Activated B cell treated with CpG ODN at 0.5 μM for 24 hours (primary cell): ENCODE measurements at regions of chr3 and their contacts with region 1.

Region 1: DNA sequence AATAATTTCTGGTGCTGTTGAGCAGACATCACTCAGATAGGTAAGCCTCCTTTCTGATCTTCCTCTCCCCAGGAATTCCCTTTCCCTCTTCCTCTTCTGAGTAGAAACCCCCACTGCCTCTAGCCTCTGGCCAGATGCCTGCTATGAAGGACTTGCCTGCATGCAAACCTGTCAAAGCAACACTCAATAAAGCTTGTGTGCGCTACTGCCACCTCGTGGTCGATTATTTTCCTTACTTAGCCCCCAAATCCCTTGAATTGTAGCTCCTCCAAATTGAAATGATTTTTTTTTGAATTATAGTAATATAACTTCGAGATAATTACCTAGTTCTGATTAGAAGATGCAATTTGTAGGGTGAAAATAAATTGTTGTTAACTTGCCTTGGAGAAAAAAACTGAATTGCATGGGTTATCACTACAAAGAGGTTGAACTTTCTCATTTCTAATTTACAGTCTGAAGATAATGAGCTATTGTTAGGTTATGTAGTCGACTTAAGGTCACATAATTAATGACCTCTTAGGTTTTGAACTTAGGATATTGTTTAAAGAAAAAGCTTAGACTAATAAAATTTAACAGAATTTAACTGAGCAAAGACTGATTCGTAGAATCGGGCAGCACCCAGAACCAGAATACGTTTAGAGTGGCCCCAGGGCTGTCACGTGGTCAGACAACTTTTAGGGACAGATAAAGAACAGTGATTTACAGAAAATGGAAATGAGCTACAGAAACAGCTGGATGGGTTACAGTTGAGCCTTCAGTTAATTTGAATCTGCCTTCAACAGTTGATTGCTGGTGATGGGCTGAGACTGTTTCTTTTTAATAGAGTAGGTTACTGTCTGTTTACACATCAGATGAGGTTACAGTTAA is 269.3 kb downstream of the ARPP21 start:
- DNase-seq: peak; percentile 15
- ATAC-seq: no peak
- H3K4me3 Mint-ChIP-seq: no peak overlapping the region
- H3K27ac Mint-ChIP-seq: no peak overlapping the region
- H3K4me1 Mint-ChIP-seq: no peaks in the 10 kb centered on the region
- H3K27me3 Mint-ChIP-seq: no peaks in the 10 kb centered on the region
- CTCF ChIP-seq: peak; percentile 46

Region 2: DNA sequence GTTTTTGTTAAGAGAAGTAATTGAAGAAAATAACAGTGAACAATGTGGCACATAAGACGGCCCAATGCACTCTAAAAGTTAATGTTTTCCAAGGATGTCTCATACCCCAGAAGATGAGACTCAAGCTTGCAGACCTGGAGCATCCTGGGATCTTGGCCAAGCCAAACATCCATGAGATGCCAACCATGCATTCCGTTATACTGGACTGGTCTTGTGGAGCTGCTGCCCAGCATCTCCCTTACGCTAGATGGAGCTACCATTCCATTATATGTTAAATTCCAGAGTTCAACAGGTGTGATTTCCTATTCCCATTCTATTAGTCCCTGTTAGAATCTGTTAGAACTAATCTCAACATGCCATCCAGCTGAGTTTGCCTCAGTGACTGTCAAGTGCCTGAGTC is 1928.3 kb before region 1 on chr3:
- CTCF ChIA-PET with region 1: interaction called, 4 read pairs
- POLR2A ChIA-PET with region 1: no interaction called
- intact Hi-C with region 1: loop called (anchors 2 kb)
- DNase-seq: no peak
- ATAC-seq: no peak
- H3K4me3 Mint-ChIP-seq: no peak overlapping the region
- H3K27ac Mint-ChIP-seq: no peak overlapping the region
- H3K4me1 Mint-ChIP-seq: no peaks in the 10 kb centered on the region
- H3K27me3 Mint-ChIP-seq: no peaks in the 10 kb centered on the region
- CTCF ChIP-seq: no peak

Region 3: GRCh38 chr3:34106879-34107278 is 1801.7 kb before region 1 on chr3:
- CTCF ChIA-PET with region 1: interaction called, 3 read pairs
- POLR2A ChIA-PET with region 1: no interaction called
- intact Hi-C with region 1: loop called (anchors 5 kb)
- DNase-seq: no peak
- ATAC-seq: no peak
- H3K4me3 Mint-ChIP-seq: no peak overlapping the region
- H3K27ac Mint-ChIP-seq: no peak overlapping the region
- H3K4me1 Mint-ChIP-seq: peaks cover 31% of the 10 kb centered on the region
- H3K27me3 Mint-ChIP-seq: no peaks in the 10 kb centered on the region
- CTCF ChIP-seq: no peak

Region 4: DNA sequence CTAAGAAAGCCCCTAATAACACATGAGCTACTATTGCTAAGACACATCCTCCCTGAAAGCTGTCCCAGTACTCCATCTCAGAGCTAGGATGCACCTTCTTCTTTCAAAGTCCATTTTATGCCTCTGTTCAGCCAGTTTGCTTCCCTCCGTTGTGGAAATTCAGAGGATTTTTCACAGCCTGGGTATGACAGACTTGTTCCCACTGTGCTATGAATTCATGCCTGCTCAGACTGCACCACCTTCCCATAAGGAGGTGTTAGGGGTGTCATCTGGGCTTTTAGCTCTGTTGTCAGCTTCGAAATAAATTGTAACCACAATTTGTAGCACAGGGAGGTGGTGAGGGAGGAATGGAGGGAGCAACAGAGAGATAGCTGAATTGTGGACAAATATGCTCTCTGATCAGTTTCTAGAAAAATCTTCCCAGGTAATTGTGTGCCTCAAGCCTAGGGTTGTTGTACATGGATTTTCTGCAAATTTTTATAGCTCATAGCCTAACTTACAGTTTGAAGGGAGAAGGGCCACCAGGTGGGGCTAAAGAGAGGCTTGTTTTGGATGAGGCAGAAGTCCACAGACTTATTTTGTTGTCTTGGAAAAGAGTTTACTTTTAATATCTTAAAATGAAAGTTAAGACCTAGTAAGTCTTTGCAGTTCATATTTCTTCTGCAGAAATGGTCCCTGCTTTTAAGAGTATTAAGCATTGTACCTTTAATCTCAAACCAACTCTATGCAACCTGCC is 1648.2 kb before region 1 on chr3:
- CTCF ChIA-PET with region 1: interaction called, 4 read pairs
- POLR2A ChIA-PET with region 1: no interaction called
- intact Hi-C with region 1: loop called (anchors 5 kb)
- DNase-seq: no peak
- ATAC-seq: no peak
- H3K4me3 Mint-ChIP-seq: no peak overlapping the region
- H3K27ac Mint-ChIP-seq: no peak overlapping the region
- H3K4me1 Mint-ChIP-seq: peaks cover 17% of the 10 kb centered on the region
- H3K27me3 Mint-ChIP-seq: no peaks in the 10 kb centered on the region
- CTCF ChIP-seq: no peak

Region 5: GRCh38 chr3:34882764-34883163 is 1025.8 kb before region 1 on chr3:
- CTCF ChIA-PET with region 1: no interaction called
- POLR2A ChIA-PET with region 1: no interaction called
- intact Hi-C with region 1: loop called (anchors 10 kb)
- DNase-seq: no peak
- ATAC-seq: no peak
- H3K4me3 Mint-ChIP-seq: no peak overlapping the region
- H3K27ac Mint-ChIP-seq: no peak overlapping the region
- H3K4me1 Mint-ChIP-seq: no peaks in the 10 kb centered on the region
- H3K27me3 Mint-ChIP-seq: no peaks in the 10 kb centered on the region
- CTCF ChIP-seq: no peak

Region 6: DNA sequence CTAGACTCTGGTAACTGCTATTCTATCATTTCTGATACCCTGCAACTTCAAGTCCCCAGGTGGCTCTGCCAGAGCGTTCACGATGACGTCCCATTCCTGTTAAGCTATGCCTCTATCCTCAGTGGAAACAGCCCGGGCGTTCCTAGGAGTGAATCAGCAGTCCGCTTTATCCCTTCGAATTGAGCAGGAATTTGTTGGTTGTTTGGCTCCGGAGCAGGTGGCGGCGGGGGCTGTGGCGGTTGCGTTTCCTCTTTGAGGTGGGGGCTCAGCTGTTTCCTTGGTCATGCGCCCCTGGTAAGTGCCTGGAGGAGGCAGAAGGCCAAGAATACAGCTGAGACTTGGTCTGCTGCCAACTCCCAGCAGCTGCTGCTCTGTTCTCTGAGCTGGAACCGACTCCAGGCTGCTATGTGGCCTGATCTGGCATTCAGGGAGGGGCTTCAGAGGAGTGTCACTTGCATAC is 244.1 kb before region 1 on chr3:
- CTCF ChIA-PET with region 1: no interaction called
- POLR2A ChIA-PET with region 1: no interaction called
- intact Hi-C with region 1: no loop called
- DNase-seq: peak; percentile 14
- ATAC-seq: peak; percentile 28
- H3K4me3 Mint-ChIP-seq: no peak overlapping the region
- H3K27ac Mint-ChIP-seq: no peak overlapping the region
- H3K4me1 Mint-ChIP-seq: peaks cover 6% of the 10 kb centered on the region
- H3K27me3 Mint-ChIP-seq: no peaks in the 10 kb centered on the region
- CTCF ChIP-seq: no peak

Region 7: DNA sequence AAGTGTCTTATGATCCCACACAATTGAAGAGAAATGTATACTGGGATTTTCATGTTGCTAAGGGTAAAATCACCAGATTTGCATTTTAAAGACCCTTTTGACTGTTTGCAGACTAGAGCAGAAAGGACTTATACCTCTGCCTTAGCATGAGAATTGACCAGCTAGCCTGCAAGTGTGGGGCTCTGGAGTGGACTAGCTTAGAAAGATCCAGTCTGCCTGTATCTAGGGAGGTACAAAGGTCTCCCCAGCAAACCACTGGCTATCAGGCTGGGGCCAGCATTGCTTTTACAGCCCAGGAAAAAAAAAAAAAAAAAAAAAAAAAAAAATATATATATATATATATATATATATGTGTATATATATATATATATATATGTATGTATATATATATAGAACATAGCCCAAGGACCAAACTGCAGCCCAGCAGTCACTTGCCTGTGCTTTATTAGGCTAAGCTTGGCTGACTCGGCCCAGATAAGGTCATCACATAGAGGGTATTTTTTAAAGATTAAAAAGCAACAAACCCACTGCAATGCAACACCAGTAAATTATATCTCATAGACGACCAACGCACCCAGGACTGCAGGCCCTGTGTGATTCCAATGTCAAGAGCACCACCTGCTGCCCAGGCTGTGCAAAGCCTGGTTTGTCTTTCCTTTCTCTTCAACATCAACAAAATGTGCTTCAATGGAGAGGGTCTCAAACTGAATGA is 792.1 kb after region 1 on chr3:
- CTCF ChIA-PET with region 1: interaction called, 4 read pairs
- POLR2A ChIA-PET with region 1: no interaction called
- intact Hi-C with region 1: loop called (anchors 2 kb)
- DNase-seq: no peak
- ATAC-seq: peak; percentile 66
- H3K4me3 Mint-ChIP-seq: no peak overlapping the region
- H3K27ac Mint-ChIP-seq: no peak overlapping the region
- H3K4me1 Mint-ChIP-seq: no peaks in the 10 kb centered on the region
- H3K27me3 Mint-ChIP-seq: peaks cover 1% of the 10 kb centered on the region
- CTCF ChIP-seq: no peak